Calu3 (cell line): ENCODE measurements at regions of chr11 and their contacts with region 1.

Region 1: GRCh38 chr11:119481021-119481666 is 58.2 kb upstream of the THY1 start:
- DNase-seq: peak; percentile 87
- H3K4me3 Mint-ChIP-seq: no peak overlapping the region
- H3K27ac Mint-ChIP-seq: no peak overlapping the region
- H3K4me1 Mint-ChIP-seq: peaks cover 8% of the 10 kb centered on the region
- H3K27me3 Mint-ChIP-seq: peaks cover 41% of the 10 kb centered on the region
- CTCF ChIP-seq: peak; percentile 83

Region 2: DNA sequence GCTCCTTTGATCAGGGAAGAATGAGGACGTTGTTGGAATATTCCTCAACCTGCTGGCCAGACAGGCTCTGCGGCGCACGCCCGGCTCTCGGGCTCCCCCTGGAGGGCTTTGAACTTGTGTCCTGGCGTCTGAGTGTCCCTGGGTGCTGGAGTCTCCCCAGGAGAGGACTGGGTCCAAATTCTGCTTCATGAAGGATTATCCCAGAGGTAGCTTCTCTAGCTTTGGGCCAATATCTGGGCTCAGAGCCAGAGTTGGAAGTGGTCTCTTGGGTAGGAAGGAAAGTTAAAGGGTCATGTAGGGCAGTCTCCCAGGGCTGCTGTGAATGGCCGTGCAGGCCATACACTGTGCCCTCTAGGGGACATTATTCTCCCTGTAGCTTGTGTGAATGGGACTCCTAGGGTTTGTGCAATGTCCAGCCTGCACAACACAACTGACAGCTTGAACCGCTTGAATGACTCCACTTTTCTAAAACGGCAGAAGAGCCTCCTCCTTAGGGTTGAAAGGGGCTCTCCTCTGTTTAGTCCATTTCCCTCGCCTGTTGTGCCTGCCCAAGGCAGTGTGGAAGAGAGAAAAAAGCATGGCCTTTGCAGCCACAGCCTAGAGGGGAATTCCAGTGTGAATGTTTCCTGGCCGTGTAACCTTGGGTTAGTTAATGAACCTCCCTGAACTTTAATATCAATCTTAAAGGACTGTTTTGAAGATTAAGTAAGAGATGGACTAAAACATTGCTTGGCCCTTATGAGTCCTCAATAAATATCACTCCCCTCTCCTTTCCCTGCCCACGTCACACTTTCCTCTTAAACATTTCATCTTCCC is 53.0 kb after region 1 on chr11:
- CTCF ChIA-PET with region 1: interaction called, 3 read pairs
- intact Hi-C with region 1: loop called (anchors 5 kb)
- DNase-seq: peak; percentile 84
- H3K4me3 Mint-ChIP-seq: no peak overlapping the region
- H3K27ac Mint-ChIP-seq: no peak overlapping the region
- H3K4me1 Mint-ChIP-seq: peaks cover 12% of the 10 kb centered on the region
- H3K27me3 Mint-ChIP-seq: peaks cover 1% of the 10 kb centered on the region
- CTCF ChIP-seq: peak; percentile 84

Region 3: GRCh38 chr11:119641983-119642745 is 161.0 kb after region 1 on chr11:
- CTCF ChIA-PET with region 1: no interaction called
- intact Hi-C with region 1: loop called (anchors 10 kb)
- DNase-seq: peak; percentile 33
- H3K4me3 Mint-ChIP-seq: no peak overlapping the region
- H3K27ac Mint-ChIP-seq: no peak overlapping the region
- H3K4me1 Mint-ChIP-seq: no peaks in the 10 kb centered on the region
- H3K27me3 Mint-ChIP-seq: peaks cover 14% of the 10 kb centered on the region
- CTCF ChIP-seq: peak; percentile 70

Region 4: GRCh38 chr11:120108154-120108865 is 627.2 kb after region 1 on chr11:
- CTCF ChIA-PET with region 1: interaction called, 3 read pairs
- intact Hi-C with region 1: loop called (anchors 10 kb)
- DNase-seq: peak; percentile 75
- H3K4me3 Mint-ChIP-seq: no peak overlapping the region
- H3K27ac Mint-ChIP-seq: no peak overlapping the region
- H3K4me1 Mint-ChIP-seq: no peaks in the 10 kb centered on the region
- H3K27me3 Mint-ChIP-seq: peaks cover 45% of the 10 kb centered on the region
- CTCF ChIP-seq: peak; percentile 87